Activated CD4-positive, alpha-beta memory T cell treated with anti-CD3 and anti-CD28 coated beads for 36 hours (primary cell): ENCODE measurements at regions of chr2 and their contacts with region 1.

Region 1: DNA sequence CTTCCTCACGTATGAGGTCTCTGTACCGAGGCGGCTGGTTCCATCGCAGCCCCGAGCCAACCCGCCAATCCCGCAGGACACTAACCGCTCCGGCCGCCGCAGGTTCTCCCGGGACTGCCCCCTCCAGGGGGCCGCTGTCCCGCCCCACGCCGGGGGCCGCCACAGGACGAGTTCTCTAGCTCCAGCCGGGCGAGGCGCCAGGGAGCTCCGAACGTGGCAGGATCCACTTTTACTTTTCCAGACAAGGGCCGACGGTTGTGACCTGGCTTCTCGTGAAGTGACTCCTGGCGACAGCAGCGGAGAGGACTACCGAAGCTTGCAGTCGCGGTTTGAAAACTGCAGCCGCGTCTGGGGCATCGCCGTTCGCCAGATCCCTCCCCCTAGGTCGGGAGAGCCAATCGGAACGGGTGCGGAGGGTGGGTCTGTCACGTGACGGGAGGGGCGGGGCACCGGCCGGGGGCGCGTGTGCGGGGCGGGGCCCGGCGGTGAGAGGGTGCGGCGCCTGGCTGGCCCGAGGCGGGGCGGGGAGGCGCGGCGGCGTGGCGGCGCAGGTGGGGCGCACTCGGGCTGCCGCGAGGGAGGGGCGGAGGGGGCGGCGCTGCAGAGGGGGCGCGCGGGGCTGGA is at the start of gene STK17B:
- DNase-seq: peak; percentile 98
- H3K4me3 Mint-ChIP-seq: peak within 1 kb of the TSS; percentile 93
- H3K27ac Mint-ChIP-seq: peak within 1 kb of the TSS; percentile 96
- H3K4me1 Mint-ChIP-seq: peaks cover 40% of the 10 kb centered on the region
- H3K27me3 Mint-ChIP-seq: no peaks in the 10 kb centered on the region
- total RNA-seq, gene STK17B: 175 to 176 TPM

Region 2: GRCh38 chr2:196117214-196117705 is 54.1 kb before region 1 on chr2:
- CTCF ChIA-PET with region 1: no interaction called
- POLR2A ChIA-PET with region 1: no interaction called
- intact Hi-C with region 1: no loop called
- DNase-seq: no peak
- H3K4me3 Mint-ChIP-seq: no peak overlapping the region
- H3K27ac Mint-ChIP-seq: no peak overlapping the region
- H3K4me1 Mint-ChIP-seq: peaks cover 14% of the 10 kb centered on the region
- H3K27me3 Mint-ChIP-seq: no peaks in the 10 kb centered on the region

Region 3: DNA sequence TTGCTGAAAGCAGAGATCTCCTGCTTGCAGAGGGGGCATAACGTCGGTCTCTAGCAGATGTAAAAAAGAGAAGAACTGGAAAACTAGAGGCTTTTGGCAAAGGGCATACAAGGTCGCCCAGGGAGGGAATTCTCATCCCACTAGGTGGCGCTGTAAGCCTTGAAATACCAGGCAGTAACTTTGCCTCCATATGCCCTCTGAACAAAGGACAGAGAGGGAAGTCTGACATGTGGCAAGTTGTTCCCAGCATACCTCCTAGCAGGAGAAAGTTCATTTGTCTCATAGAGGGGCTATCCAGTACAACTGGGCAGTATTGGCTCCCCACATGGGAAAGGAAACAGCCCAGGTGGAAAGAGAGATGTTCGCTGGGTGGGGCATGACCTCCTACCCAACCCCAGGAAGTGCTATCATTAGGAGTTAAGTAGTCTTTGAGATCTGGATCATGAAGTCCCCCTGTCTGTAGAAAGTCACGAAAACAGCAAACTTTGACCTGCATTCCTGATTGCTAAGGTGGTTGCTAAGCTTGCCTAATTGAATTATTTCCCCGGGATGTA is 39.9 kb before region 1 on chr2:
- CTCF ChIA-PET with region 1: interaction called, 3 read pairs
- POLR2A ChIA-PET with region 1: no interaction called
- intact Hi-C with region 1: loop called (anchors 5 kb)
- DNase-seq: peak; percentile 75
- H3K4me3 Mint-ChIP-seq: no peak overlapping the region
- H3K27ac Mint-ChIP-seq: peak overlapping the region; percentile 79
- H3K4me1 Mint-ChIP-seq: peaks cover 12% of the 10 kb centered on the region
- H3K27me3 Mint-ChIP-seq: no peaks in the 10 kb centered on the region

Region 4: GRCh38 chr2:196205881-196206435 is 34.6 kb after region 1 on chr2:
- CTCF ChIA-PET with region 1: interaction called, 4 read pairs
- POLR2A ChIA-PET with region 1: interaction called, 9 read pairs
- intact Hi-C with region 1: loop called (anchors 1 kb)
- DNase-seq: no peak
- H3K4me3 Mint-ChIP-seq: no peak overlapping the region
- H3K27ac Mint-ChIP-seq: peak overlapping the region; percentile 7
- H3K4me1 Mint-ChIP-seq: peaks cover 31% of the 10 kb centered on the region
- H3K27me3 Mint-ChIP-seq: no peaks in the 10 kb centered on the region

Region 5: DNA sequence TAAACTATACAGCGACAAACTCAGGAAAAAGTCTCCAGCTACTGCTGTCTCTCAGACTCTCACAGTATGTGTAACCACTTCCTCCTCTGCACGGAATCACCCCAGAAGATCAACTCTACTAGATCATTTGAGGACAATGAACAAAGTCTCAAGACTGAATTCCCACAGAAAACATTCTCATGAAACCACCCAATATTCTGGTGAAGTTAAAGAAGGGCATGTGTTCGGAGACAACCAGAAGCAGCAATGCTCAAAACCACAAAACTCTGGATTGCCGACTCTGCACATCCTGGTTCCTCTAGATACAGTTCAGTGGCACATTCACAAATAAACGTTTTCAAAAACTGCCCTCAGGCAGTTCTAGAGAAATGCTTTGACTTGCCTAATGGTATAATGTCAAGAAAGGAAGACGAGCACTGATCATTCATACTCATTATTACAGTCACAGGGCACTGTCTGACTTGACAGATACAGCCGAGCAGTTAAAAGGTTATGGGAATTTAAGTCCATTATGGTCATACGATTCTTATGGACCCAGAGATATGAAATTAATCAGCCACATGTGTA is 91.9 kb after region 1 on chr2:
- CTCF ChIA-PET with region 1: interaction called, 5 read pairs
- POLR2A ChIA-PET with region 1: interaction called, 56 read pairs
- intact Hi-C with region 1: loop called (anchors 1 kb)
- DNase-seq: peak; percentile 62
- H3K4me3 Mint-ChIP-seq: peak overlapping the region; percentile 75
- H3K27ac Mint-ChIP-seq: peak overlapping the region; percentile 99
- H3K4me1 Mint-ChIP-seq: peaks cover 77% of the 10 kb centered on the region
- H3K27me3 Mint-ChIP-seq: no peaks in the 10 kb centered on the region

Region 6: GRCh38 chr2:197255543-197255942 is 1084.2 kb after region 1 on chr2:
- CTCF ChIA-PET with region 1: no interaction called
- POLR2A ChIA-PET with region 1: no interaction called
- intact Hi-C with region 1: loop called (anchors 5 kb)
- DNase-seq: peak; percentile 88
- H3K4me3 Mint-ChIP-seq: peak overlapping the region; percentile 85
- H3K27ac Mint-ChIP-seq: peak overlapping the region; percentile 100
- H3K4me1 Mint-ChIP-seq: peaks cover 82% of the 10 kb centered on the region
- H3K27me3 Mint-ChIP-seq: no peaks in the 10 kb centered on the region